Right cardiac atrium (tissue), 5 donors: ENCODE measurements at regions of chr3 and their contacts with region 1.

Region 1: GRCh38 chr3:131502530-131503245 is at the start of gene MRPL3:
- DNase-seq: peak; percentile 90 to 94 (median 93)
- ATAC-seq: peak; percentile 97
- H3K4me3 ChIP-seq: peak within 1 kb of the TSS; percentile 66
- H3K27ac ChIP-seq: peak within 1 kb of the TSS; percentile 61
- H3K4me1 ChIP-seq: no peaks in the 10 kb centered on the region
- H3K27me3 ChIP-seq: no peaks in the 10 kb centered on the region
- total RNA-seq, gene MRPL3: 46.9 to 52.1 (median 48.3) TPM

Region 2: DNA sequence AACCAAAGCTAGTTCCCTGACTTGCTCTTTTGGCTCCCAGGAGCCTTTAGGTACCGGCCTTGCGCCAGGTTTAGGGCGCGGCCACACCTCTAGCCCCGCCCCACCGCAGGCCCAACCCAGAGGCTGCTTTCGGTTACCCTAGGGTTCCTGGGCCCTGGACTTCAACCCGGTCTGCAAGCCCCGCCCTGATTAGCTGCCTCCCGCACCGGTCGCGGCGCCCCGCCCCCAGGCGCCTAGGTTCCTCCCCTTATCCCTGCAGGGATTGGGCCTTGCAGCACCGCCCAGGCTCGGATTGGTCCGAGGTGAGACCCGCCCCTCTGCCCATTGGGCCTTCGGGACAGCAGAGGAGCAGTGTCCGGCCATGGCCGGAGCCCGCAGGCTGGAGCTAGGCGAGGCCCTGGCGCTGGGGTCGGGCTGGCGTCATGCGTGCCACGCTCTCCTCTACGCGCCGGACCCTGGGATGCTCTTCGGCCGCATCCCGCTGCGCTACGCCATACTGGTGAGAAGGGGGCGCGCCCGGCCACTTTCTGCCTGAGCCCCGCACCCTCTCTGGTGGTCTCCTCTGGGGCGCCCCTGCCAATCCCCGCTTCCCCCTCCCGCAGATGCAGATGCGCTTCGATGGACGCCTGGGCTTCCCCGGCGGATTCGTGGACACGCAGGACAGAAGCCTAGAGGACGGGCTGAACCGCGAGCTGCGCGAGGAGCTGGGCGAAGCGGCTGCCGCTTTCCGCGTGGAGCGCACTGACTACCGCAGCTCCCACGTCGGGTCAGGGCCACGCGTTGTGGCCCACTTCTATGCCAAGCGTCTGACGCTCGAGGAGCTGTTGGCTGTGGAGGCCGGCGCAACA is 121.0 kb before region 1 on chr3 and contains the start of gene NUDT16:
- intact Hi-C with region 1: loop called in 1 of 4 experiments (anchors 10 kb)
- DNase-seq: peak; percentile 100
- ATAC-seq: peak; percentile 99
- H3K4me3 ChIP-seq: peak within 1 kb of the TSS; percentile 67
- H3K27ac ChIP-seq: peak within 1 kb of the TSS; percentile 92
- H3K4me1 ChIP-seq: peaks cover 30% of the 10 kb centered on the region
- H3K27me3 ChIP-seq: no peaks in the 10 kb centered on the region
- total RNA-seq, gene NUDT16: 22.5 to 35.4 (median 26.2) TPM